Mammary epithelial cell (primary cell): ENCODE measurements at regions of chr4 and their contacts with region 1.

Region 1: GRCh38 chr4:23881674-23882337 is 8.0 kb downstream of the PPARGC1A start:
- DNase-seq: no peak
- H3K4me3 ChIP-seq: no peak overlapping the region
- H3K27ac ChIP-seq: no peak overlapping the region
- H3K4me1 ChIP-seq: peaks cover 13% of the 10 kb centered on the region
- H3K27me3 ChIP-seq: no peaks in the 10 kb centered on the region
- CTCF ChIP-seq: no peak

Region 2: DNA sequence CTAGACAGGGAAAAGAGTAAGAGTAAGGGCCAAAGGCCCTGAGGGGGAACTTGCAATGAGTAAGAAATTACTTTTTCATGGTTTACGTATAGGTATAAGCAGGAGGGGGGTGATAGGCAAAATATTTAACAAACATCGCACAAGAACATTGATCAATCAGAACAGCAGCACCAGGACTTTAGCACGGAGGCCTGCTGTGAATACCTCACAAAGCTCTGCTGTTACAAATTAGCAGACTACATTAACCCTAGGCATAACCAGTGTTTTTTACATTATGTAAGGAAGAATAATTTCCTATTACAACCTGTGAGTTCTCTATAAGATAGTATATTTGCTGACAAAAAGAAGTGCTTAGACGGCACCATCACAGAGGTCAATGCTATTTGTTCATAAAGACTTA is 36.8 kb before region 1 on chr4:
- CTCF ChIA-PET with region 1: no interaction called
- dilution Hi-C with region 1: no loop called
- in situ Hi-C with region 1: no loop called
- intact Hi-C with region 1: loop called (anchors 2 kb)
- DNase-seq: no peak
- H3K4me3 ChIP-seq: no peak overlapping the region
- H3K27ac ChIP-seq: no peak overlapping the region
- H3K4me1 ChIP-seq: no peaks in the 10 kb centered on the region
- H3K27me3 ChIP-seq: no peaks in the 10 kb centered on the region
- CTCF ChIP-seq: no peak

Region 3: GRCh38 chr4:24137963-24138601 is 256.3 kb after region 1 on chr4:
- CTCF ChIA-PET with region 1: no interaction called
- dilution Hi-C with region 1: no loop called
- in situ Hi-C with region 1: no loop called
- intact Hi-C with region 1: no loop called
- DNase-seq: no peak
- H3K4me3 ChIP-seq: no peak overlapping the region
- H3K27ac ChIP-seq: no peak overlapping the region
- H3K4me1 ChIP-seq: no peaks in the 10 kb centered on the region
- H3K27me3 ChIP-seq: no peaks in the 10 kb centered on the region
- CTCF ChIP-seq: no peak